PC-3 (cell line): ENCODE measurements at regions of chr17 and their contacts with region 1.

Region 1: GRCh38 chr17:31586946-31587345 is 195.5 kb downstream of the RAB11FIP4 start:
- DNase-seq: no peak
- ATAC-seq: no peak
- H3K4me3 ChIP-seq: no peak overlapping the region
- H3K27ac ChIP-seq: no peak overlapping the region
- H3K4me1 ChIP-seq: peaks cover 9% of the 10 kb centered on the region
- H3K27me3 ChIP-seq: no peaks in the 10 kb centered on the region
- CTCF ChIP-seq: no peak

Region 2: GRCh38 chr17:31935512-31935911 is 348.6 kb after region 1 on chr17:
- CTCF ChIA-PET with region 1: no interaction called
- POLR2A ChIA-PET with region 1: interaction called, 14 read pairs
- intact Hi-C with region 1: no loop called
- DNase-seq: no peak
- ATAC-seq: no peak
- H3K4me3 ChIP-seq: no peak overlapping the region
- H3K27ac ChIP-seq: no peak overlapping the region
- H3K4me1 ChIP-seq: no peaks in the 10 kb centered on the region
- H3K27me3 ChIP-seq: no peaks in the 10 kb centered on the region
- CTCF ChIP-seq: no peak